ENCODE measurements at regions of chr12 and their contacts with region 1.

Region 1: DNA sequence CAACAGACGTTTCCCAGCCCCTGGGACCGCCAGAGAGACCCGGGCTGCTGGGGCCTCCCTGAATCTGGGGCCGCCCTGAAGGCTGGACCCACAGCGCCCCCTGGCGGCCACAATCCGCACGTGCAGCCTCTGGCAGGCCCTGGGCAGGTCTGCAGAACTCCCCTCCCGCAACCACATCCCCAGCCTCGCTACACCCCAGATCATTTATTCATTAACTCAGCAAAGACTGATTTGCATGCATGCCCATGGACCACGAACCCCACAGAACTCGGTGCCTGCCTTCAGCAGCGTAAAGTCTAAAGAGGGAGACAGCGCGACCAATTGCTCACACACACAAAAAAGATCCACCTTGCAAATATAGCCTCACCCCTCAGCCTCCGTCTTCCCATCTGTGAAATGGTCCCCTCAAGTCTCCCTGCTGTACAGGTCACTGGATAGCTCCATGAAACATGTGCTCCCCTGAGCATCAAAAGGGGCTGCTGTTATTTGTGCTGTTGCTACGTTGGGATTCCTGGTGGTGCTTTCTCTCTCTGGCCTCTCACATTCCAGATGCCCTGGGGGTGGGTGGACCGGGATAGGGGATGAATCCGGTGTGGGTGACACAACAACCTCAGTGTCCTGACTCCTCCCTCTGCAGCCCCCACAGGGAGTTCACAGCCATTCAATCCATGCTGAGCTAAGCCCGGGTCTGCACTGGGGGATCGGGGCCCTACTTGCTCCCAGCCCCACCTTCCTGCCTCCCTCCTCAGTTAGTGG is 96.4 kb downstream of the SCARB1 start:
- DNase-seq: peak; percentile 54 to 69
- ATAC-seq: peak; percentile 43 to 64
- H3K4me3 ChIP-seq: no peak overlapping the region
- H3K27ac ChIP-seq: peak overlapping the region; percentile 80 to 86 (median 84)
- H3K4me1 ChIP-seq: peaks cover 40 to 44% of the 10 kb centered on the region in 2 donors
- H3K27me3 ChIP-seq: no peaks in the 10 kb centered on the region
- CTCF ChIP-seq: peak; percentile 98 to 100 (median 99)
- POLR2A ChIP-seq: no peak

Region 2: DNA sequence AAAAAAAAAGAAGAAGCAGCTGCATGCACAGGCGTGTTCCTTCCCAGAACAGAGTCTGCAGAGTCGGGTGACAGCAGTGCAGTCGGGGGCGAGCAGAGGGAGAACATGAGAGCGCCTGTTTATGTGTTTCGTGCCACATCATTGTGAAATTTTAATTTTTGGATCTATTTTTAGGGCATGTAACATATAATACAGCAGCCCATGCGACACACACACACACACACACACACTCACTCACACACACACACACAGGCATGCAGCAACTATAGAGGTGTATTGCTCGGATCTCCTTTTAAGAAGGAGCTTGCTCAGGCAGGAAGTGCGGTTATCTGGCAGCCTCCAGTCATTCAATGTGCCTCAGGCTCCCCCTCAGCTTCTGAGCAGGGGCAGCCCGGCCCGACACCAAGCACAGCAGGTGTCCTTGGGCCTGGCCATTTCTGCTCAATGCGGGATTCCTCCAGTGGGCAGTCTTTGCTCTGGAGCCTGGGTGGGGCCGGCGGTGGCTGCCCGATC is 722.4 kb before region 1 on chr12:
- in situ Hi-C with region 1: loop called in 2 of 4 experiments (anchors 5 kb)
- intact Hi-C with region 1: no loop called
- DNase-seq: no peak
- ATAC-seq: peak; percentile 47 to 75
- H3K4me3 ChIP-seq: no peak overlapping the region
- H3K27ac ChIP-seq: no peak overlapping the region
- H3K4me1 ChIP-seq: peaks cover 0 to 11% of the 10 kb centered on the region in 2 donors
- H3K27me3 ChIP-seq: no peaks in the 10 kb centered on the region
- CTCF ChIP-seq: no peak
- POLR2A ChIP-seq: no peak

Region 3: GRCh38 chr12:124347716-124348357 is 419.4 kb before region 1 on chr12:
- in situ Hi-C with region 1: loop called (anchors 10 to 25 kb)
- intact Hi-C with region 1: no loop called
- DNase-seq: no peak
- ATAC-seq: peak; percentile 28 to 38
- H3K4me3 ChIP-seq: no peak overlapping the region
- H3K27ac ChIP-seq: peak overlapping the region; percentile 63 to 82 (median 72)
- H3K4me1 ChIP-seq: peaks cover 0 to 9% of the 10 kb centered on the region in 2 donors
- H3K27me3 ChIP-seq: no peaks in the 10 kb centered on the region
- CTCF ChIP-seq: peak; percentile 47 to 82 (median 67)
- POLR2A ChIP-seq: no peak

Region 4: GRCh38 chr12:124369055-124369900 is 398.0 kb before region 1 on chr12:
- in situ Hi-C with region 1: loop called in 2 of 4 experiments (anchors 25 kb)
- intact Hi-C with region 1: no loop called
- DNase-seq: peak; percentile 93 to 99
- ATAC-seq: peak; percentile 70 to 75
- H3K4me3 ChIP-seq: peak overlapping the region in 3 of 4 donors; percentile 30 to 41 (median 35)
- H3K27ac ChIP-seq: peak overlapping the region; percentile 93 to 98 (median 97)
- H3K4me1 ChIP-seq: peaks cover 75 to 83% of the 10 kb centered on the region in 2 donors
- H3K27me3 ChIP-seq: no peaks in the 10 kb centered on the region
- CTCF ChIP-seq: peak; percentile 58 to 82 (median 74)
- POLR2A ChIP-seq: peak; percentile 49 to 60

Region 5: GRCh38 chr12:124518051-124518932 is 249.0 kb before region 1 on chr12:
- in situ Hi-C with region 1: loop called in 1 of 4 experiments (anchors 10 kb)
- intact Hi-C with region 1: loop called (anchors 5 kb)
- DNase-seq: peak; percentile 95 to 99
- ATAC-seq: peak; percentile 75 to 84
- H3K4me3 ChIP-seq: peak overlapping the region; percentile 53 to 59 (median 54)
- H3K27ac ChIP-seq: peak overlapping the region; percentile 90 to 99 (median 96)
- H3K4me1 ChIP-seq: peaks cover 83 to 94% of the 10 kb centered on the region in 2 donors
- H3K27me3 ChIP-seq: no peaks in the 10 kb centered on the region
- CTCF ChIP-seq: no peak
- POLR2A ChIP-seq: peak; percentile 45 to 65

Region 6: GRCh38 chr12:124578445-124578844 is 188.8 kb before region 1 on chr12:
- in situ Hi-C with region 1: loop called in 3 of 4 experiments (anchors 5 to 10 kb)
- intact Hi-C with region 1: no loop called
- DNase-seq: no peak
- ATAC-seq: no peak
- H3K4me3 ChIP-seq: no peak overlapping the region
- H3K27ac ChIP-seq: no peak overlapping the region
- H3K4me1 ChIP-seq: no peaks in the 10 kb centered on the region
- H3K27me3 ChIP-seq: no peaks in the 10 kb centered on the region
- CTCF ChIP-seq: no peak
- POLR2A ChIP-seq: no peak

Region 7: GRCh38 chr12:124740691-124741137 is 26.5 kb before region 1 on chr12:
- in situ Hi-C with region 1: no loop called
- intact Hi-C with region 1: loop called (anchors 2 kb)
- DNase-seq: peak; percentile 51 to 64
- ATAC-seq: peak; percentile 77 to 81
- H3K4me3 ChIP-seq: peak overlapping the region in 1 of 4 donors; percentile 0
- H3K27ac ChIP-seq: peak overlapping the region; percentile 51 to 76 (median 64)
- H3K4me1 ChIP-seq: peaks cover 11 to 23% of the 10 kb centered on the region in 2 donors
- H3K27me3 ChIP-seq: no peaks in the 10 kb centered on the region
- CTCF ChIP-seq: peak in 3 of 5 experiments; percentile 9 to 41 (median 24)
- POLR2A ChIP-seq: peak; percentile 11 to 16

Region 8: DNA sequence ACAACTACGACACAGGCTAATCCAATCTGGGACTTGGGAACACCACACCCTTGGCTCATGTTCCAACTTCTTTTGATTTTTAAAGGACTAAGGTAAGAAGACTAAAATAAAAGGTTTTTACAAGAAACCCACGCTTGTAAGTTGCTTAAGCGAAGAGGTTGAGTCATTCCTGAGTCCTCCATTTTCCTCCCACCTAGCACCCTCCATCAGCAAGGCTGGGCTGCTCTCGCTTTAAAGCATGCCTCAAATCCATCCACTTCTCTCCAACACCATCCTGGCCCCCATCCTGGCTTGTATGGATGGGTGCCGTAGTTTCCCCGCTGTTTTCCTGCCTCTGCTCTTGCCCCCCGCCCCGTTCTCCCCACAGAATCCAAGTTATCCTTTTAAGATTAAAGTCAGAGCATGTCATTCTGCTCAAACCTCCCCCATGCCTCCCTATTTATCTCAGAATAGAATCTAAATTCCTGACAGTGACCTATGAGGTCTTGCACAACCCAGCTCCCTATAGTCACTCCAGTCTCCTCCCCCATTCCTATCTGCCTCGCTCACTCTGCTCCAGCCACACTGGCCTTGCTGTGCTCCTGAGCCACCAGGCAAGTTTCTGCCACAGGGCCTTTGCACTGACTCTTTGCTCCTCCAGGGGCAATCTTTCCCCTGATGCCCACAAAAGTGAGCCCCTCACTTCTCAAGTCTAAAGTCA is 61.9 kb after region 1 on chr12:
- in situ Hi-C with region 1: no loop called
- intact Hi-C with region 1: no loop called
- DNase-seq: no peak
- ATAC-seq: peak in 1 of 2 donors; percentile 40
- H3K4me3 ChIP-seq: no peak overlapping the region
- H3K27ac ChIP-seq: peak overlapping the region in 1 of 4 donors; percentile 22
- H3K4me1 ChIP-seq: peaks cover 12 to 21% of the 10 kb centered on the region in 2 donors
- H3K27me3 ChIP-seq: no peaks in the 10 kb centered on the region
- CTCF ChIP-seq: no peak
- POLR2A ChIP-seq: no peak

Measured in gastrocnemius medialis (tissue), 4 donors.